ENCODE measurements at regions of chr14 and their contacts with region 1.

Region 1: DNA sequence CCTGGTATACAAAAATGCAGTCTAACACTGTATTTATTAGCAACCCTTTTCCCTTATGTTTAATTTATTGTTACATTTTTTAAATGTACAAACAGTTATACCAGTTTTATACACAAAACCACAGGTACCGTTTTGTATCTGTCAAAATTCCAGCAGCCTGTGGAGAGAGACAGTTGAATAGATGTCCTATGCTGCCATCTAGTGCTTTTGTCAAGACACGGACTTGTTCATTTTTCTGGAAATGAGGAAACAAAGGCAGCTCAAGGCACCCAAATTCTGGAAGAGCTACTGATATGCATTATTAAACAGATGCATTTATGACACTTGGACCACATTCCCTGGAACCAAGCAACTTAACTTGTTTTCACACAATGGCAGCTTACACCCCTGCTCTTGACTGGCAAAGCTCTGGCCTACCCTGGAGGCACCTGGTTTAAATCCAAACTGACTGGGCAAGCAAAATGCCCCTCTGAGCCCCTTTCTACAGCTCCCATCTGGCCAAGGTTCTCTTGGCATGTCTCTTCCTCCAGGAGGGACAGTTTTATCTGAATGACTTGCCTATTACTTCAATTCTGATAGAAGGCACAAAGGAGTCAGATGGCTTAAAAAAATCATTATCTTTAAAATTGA is 286.9 kb upstream of the PRKD1 start:
- H3K4me3 ChIP-seq: no peak overlapping the region
- H3K27ac ChIP-seq: no peak overlapping the region
- H3K4me1 ChIP-seq: no peaks in the 10 kb centered on the region
- CTCF ChIP-seq: peak; percentile 39; the same call in 1 of the 2 replicates

Region 2: DNA sequence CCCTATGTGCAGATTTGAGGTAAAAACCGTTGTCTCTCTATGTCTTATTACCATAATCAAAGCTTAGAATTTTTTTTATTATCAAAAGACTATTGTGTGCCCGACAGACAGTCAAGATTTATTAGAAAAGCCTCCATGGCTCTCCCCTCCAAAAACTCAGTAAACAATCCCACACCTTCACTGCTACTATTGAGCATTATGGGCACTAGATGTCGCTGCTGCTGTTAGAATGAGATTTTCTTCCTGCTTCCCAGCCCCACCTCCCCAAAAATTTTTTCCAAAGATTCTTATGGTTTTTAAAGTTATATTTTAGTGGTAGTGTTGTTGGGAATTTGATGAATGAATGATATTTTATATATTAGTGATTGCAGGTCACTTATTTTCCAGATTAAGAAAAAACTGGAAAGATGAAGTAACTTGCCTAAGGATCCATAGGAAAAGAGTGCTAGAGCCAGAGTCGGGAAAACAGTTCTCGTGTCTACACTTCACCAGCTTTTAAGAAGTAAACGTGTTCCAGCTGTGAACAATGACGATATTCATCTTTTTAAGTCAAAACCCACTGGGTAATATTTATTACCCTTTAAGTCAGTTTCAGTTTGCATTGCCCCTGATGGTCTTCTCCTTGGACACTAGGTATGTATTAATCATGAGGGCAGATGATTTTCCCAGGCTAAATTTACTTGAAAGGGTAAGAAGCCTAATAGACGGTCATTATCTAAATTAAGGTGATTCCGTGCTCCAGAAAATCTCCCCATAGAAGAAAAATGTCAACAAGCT is 1460.2 kb before region 1 on chr14:
- CTCF ChIA-PET with region 1: interaction called, 18 read pairs
- POLR2A ChIA-PET with region 1: no interaction called
- H3K4me3 ChIP-seq: no peak overlapping the region
- H3K27ac ChIP-seq: no peak overlapping the region
- H3K4me1 ChIP-seq: no peaks in the 10 kb centered on the region
- CTCF ChIP-seq: 0 out of 2 replicates have a peak, but pooled peaks have one; percentile 31

Region 3: DNA sequence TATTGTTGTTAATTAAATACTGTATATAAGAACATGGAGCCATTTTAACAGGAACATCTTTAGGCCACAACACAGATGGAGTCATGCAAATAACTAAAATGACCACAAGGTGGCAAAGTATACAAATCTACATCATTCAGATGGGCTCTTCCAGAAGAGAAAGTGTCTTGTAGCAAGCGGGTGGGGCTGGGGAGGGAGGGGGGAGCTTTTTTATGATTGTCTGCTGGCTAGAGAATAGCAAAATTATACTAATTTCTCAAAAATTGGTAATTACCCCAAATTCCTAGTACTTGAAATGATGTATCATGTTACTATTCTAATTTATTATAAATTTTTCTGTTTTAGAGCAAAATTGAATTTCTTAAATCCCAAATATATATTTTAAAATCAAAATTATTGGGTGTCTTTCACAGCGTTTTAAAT is 665.6 kb before region 1 on chr14:
- CTCF ChIA-PET with region 1: interaction called, 21 read pairs
- POLR2A ChIA-PET with region 1: no interaction called
- H3K4me3 ChIP-seq: no peak overlapping the region
- H3K27ac ChIP-seq: no peak overlapping the region
- H3K4me1 ChIP-seq: no peaks in the 10 kb centered on the region
- CTCF ChIP-seq: no peak

Region 4: DNA sequence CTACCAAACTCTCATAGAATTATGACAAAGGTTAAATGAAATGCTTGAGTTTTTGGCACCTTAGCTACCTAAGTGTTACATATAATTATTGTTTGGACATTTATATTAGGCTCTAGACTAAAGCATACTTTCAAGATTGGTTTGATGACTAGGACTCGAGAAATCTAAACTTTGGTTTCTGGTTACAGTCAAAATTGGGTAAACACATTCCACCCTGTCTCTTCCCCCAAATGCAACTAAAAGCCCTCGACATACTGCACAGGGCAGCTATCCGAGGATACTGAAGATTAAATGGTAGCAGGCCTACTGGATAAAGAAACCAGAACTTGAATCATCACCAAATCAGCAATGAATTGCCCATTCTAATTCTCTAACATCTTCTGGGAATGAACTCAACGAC is 656.1 kb before region 1 on chr14:
- CTCF ChIA-PET with region 1: interaction called, 10 read pairs
- POLR2A ChIA-PET with region 1: no interaction called
- H3K4me3 ChIP-seq: no peak overlapping the region
- H3K27ac ChIP-seq: no peak overlapping the region
- H3K4me1 ChIP-seq: no peaks in the 10 kb centered on the region
- CTCF ChIP-seq: no peak

Region 5: GRCh38 chr14:30005114-30005808 is 209.3 kb before region 1 on chr14:
- CTCF ChIA-PET with region 1: interaction called, 13 read pairs
- POLR2A ChIA-PET with region 1: no interaction called
- H3K4me3 ChIP-seq: no peak overlapping the region
- H3K27ac ChIP-seq: no peak overlapping the region
- H3K4me1 ChIP-seq: peaks cover 9% of the 10 kb centered on the region; the same call in 1 of the 2 replicates
- CTCF ChIP-seq: peak; percentile 33; the same call in 1 of the 2 replicates

Region 6: DNA sequence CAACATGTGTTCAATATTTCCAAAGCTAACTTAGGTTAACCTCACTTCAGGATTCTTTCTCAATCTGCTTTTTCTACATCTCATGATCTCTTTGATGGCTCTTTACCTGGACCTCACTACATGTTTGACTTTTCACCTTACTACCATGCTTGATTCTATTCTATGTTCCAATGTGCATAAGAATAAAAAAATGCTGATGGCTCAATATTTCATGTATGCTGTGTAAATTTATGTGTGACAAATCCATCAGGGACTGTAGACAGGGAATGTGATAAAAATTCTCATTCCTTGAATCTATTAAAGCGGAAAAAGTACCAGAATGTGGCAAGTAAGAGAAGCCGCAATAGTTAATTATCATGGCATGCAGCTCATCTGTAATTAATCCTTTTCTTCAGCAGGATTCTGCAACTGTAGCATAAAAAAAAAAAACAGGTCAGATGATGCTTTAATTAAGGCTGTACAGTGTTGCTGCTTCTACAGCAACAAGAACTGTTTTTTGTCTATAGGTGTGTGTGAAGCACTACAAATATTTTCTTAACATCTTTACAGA is 10.1 kb before region 1 on chr14:
- CTCF ChIA-PET with region 1: interaction called, 16 read pairs
- POLR2A ChIA-PET with region 1: no interaction called
- H3K4me3 ChIP-seq: no peak overlapping the region
- H3K27ac ChIP-seq: no peak overlapping the region
- H3K4me1 ChIP-seq: no peaks in the 10 kb centered on the region
- CTCF ChIP-seq: no peak

Region 7: GRCh38 chr14:30270200-30271161 is 55.9 kb after region 1 on chr14:
- CTCF ChIA-PET with region 1: interaction called, 15 read pairs
- POLR2A ChIA-PET with region 1: no interaction called
- H3K4me3 ChIP-seq: peak overlapping the region; percentile 34
- H3K27ac ChIP-seq: no peak overlapping the region
- H3K4me1 ChIP-seq: no peaks in the 10 kb centered on the region
- CTCF ChIP-seq: peak; percentile 68; the same call in 1 of the 2 replicates

Measured in HEK293 (cell line).